Aorta (tissue), 5 donors: ENCODE measurements at regions of chr15 and their contacts with region 1.

Region 1: GRCh38 chr15:82999905-83000671 is 11.4 kb downstream of the C15orf40 start:
- DNase-seq: no peak
- ATAC-seq: peak; percentile 77
- H3K4me3 ChIP-seq: no peak overlapping the region
- H3K27ac ChIP-seq: no peak overlapping the region
- H3K4me1 ChIP-seq: peaks cover 0 to 3% of the 10 kb centered on the region in 2 donors
- H3K27me3 ChIP-seq: no peaks in the 10 kb centered on the region

Region 2: GRCh38 chr15:82640672-82641071 is 359.4 kb before region 1 on chr15:
- intact Hi-C with region 1: no loop called
- DNase-seq: no peak
- ATAC-seq: no peak
- H3K4me3 ChIP-seq: no peak overlapping the region
- H3K27ac ChIP-seq: no peak overlapping the region
- H3K4me1 ChIP-seq: no peaks in the 10 kb centered on the region
- H3K27me3 ChIP-seq: no peaks in the 10 kb centered on the region

Region 3: GRCh38 chr15:82849556-82850512 is 150.3 kb before region 1 on chr15:
- intact Hi-C with region 1: loop called in 1 of 2 experiments (anchors 5 kb)
- DNase-seq: peak in 1 of 2 donors; percentile 79
- ATAC-seq: peak; percentile 78
- H3K4me3 ChIP-seq: no peak overlapping the region
- H3K27ac ChIP-seq: no peak overlapping the region
- H3K4me1 ChIP-seq: no peaks in the 10 kb centered on the region
- H3K27me3 ChIP-seq: no peaks in the 10 kb centered on the region

Region 4: DNA sequence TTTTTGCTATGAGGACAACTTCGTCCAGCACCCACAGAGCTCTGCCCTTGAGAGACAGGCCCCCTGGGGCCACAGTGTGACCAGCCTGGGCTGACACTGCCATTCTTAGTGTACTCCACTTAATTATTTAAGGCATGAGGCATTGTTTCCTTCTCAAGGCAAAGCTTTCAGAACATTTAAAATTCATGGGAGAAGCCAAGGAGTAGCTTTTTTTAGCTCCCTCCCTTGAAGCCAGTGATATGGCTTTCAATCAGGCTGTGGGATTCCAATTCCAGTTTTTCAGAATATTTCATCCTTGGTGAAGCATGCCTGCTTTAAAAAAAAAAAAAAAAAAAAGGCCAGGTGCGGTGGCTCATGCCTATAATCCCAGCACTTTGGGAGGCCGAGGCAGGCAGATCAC is 68.9 kb before region 1 on chr15:
- intact Hi-C with region 1: no loop called
- DNase-seq: no peak
- ATAC-seq: no peak
- H3K4me3 ChIP-seq: no peak overlapping the region
- H3K27ac ChIP-seq: no peak overlapping the region
- H3K4me1 ChIP-seq: no peaks in the 10 kb centered on the region
- H3K27me3 ChIP-seq: no peaks in the 10 kb centered on the region

Region 5: DNA sequence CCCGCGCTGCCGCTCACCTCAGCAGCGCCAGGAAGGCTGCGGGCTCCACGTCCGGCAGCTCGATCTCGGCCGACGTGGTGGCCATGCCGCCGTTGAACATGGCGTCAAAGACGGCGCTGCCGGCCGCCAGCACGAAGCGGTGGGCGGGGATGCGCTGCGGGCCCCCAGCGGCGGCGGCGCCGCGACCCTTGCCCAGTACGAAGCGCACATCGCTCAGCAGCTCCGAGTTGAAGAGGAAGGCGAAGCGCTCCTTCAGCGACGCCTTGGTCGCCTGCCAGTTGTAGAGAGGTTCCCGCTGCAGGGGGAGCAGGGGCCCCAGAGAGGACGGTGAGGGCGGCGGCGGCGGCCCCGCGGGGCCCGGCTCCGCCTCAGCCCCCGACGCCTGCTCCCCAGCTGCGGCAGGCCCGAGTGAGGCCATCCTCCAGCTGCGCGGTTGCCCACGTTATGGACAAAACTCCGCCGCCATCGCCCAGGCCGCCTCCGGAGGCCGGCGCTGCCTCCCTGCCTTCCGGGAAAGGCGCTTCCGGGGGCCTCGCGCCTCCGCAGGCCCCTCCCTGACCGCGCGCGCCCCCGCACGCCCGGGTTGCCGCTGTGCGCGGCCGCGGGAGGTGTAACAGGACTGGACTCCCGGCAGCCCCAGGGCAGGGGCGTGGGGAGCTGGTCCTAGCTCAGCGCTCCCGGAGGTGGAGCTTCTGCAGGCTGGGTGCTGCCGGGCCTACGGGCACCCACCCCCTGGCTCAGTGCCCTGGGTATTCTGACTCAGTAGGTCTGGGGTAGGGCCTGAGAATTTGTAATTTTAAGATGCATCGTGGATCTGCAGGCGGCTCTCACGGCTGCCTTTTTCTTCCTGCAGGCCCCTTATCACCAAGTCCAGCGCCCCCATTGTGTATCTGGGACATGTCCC is 66.9 kb after region 1 on chr15 and contains the start of gene BTBD1:
- intact Hi-C with region 1: no loop called
- DNase-seq: peak; percentile 98 to 99
- ATAC-seq: peak; percentile 100
- H3K4me3 ChIP-seq: peak within 1 kb of the TSS; percentile 80 to 96
- H3K27ac ChIP-seq: peak within 1 kb of the TSS; percentile 92 to 95
- H3K4me1 ChIP-seq: peaks cover 0 to 5% of the 10 kb centered on the region in 2 donors
- H3K27me3 ChIP-seq: no peaks in the 10 kb centered on the region
- total RNA-seq, gene BTBD1: 38.3 to 47.8 TPM

Region 6: DNA sequence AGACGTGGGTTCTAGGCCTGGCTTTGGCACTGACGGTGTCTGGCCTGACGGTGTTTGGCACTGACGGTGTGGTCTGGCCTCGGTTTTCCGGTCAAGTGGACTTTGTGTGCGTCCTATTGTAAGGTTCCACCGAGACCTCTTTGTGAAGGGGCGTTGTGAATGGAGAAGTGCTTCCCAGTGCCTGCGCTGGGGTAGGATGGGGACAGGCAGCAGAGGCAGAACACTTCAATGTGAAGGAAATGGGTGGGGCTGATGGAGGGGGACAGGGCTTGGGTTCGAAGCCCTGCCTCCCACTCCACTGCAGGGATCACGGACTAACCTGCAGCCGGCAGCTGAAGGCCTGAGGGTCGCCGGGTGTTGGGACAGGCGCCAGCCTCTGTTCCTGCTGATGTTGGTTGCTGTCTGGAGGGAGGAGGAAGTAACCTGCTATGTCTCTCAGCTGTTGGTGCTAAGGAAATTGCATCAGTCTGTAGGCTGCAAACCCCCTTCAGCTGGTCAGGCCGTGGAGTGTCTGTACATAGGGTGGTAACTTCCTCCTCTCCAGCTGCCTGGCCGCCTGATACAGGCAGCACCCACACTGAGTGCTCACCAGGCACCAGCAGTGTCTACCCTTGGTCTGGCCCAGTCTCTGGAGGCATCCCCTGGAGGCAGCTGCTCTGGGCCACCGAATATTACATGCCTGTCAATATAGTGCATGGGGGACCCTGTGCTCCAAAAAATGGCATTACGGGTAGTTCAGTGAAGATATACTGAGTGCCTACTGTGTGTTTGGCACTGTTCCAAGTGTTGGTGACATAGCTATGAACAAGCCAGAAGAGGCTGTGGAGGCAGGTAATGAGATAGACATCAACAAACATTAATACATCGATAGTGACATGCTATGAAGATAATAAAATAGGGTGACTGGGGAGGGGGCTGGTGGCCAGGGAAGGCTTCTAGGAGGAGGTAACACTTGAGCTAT is 108.5 kb after region 1 on chr15:
- intact Hi-C with region 1: loop called in 1 of 2 experiments (anchors 10 kb)
- DNase-seq: peak; percentile 77 to 88
- ATAC-seq: peak; percentile 69
- H3K4me3 ChIP-seq: peak overlapping the region in 1 of 2 donors; percentile 24
- H3K27ac ChIP-seq: no peak overlapping the region
- H3K4me1 ChIP-seq: no peaks in the 10 kb centered on the region
- H3K27me3 ChIP-seq: no peaks in the 10 kb centered on the region

Region 7: GRCh38 chr15:83310521-83311472 is 310.7 kb after region 1 on chr15:
- intact Hi-C with region 1: no loop called
- DNase-seq: no peak
- ATAC-seq: no peak
- H3K4me3 ChIP-seq: no peak overlapping the region
- H3K27ac ChIP-seq: no peak overlapping the region
- H3K4me1 ChIP-seq: no peaks in the 10 kb centered on the region
- H3K27me3 ChIP-seq: no peaks in the 10 kb centered on the region